ENCODE measurements at regions of chr9 and their contacts with region 1.

Region 1: GRCh38 chr9:85569988-85570387 is 171.8 kb downstream of the AGTPBP1 start:
- DNase-seq: no peak
- ATAC-seq: no peak
- H3K4me3 ChIP-seq: no peak overlapping the region
- H3K27ac ChIP-seq: no peak overlapping the region
- H3K4me1 ChIP-seq: no peaks in the 10 kb centered on the region
- H3K27me3 ChIP-seq: no peaks in the 10 kb centered on the region
- CTCF ChIP-seq: no peak
- EP300 ChIP-seq: no peak
- POLR2A ChIP-seq: no peak
- RAD21 ChIP-seq: no peak

Region 2: GRCh38 chr9:85522459-85523092 is 47.4 kb before region 1 on chr9:
- CTCF ChIA-PET with region 1: no interaction called
- POLR2A ChIA-PET with region 1: no interaction called
- RAD21 ChIA-PET with region 1: no interaction called
- SMC1A ChIA-PET with region 1: no interaction called
- in situ Hi-C with region 1: no loop called
- intact Hi-C with region 1: loop called (anchors 5 kb)
- DNase-seq: no peak
- ATAC-seq: peak; percentile 41
- H3K4me3 ChIP-seq: peak overlapping the region; percentile 47; the same call in 1 of the 2 replicates
- H3K27ac ChIP-seq: no peak overlapping the region
- H3K4me1 ChIP-seq: no peaks in the 10 kb centered on the region
- H3K27me3 ChIP-seq: peaks cover 2 to 5% of the 10 kb centered on the region in 2 experiments; a peak in 3 of 4 replicates
- CTCF ChIP-seq: no peak
- EP300 ChIP-seq: no peak
- POLR2A ChIP-seq: no peak
- RAD21 ChIP-seq: no peak

Measured in GM12878 (cell line).